Naive thymus-derived CD4-positive, alpha-beta T cell (primary cell): ENCODE measurements at regions of chr1 and their contacts with region 1.

Region 1: DNA sequence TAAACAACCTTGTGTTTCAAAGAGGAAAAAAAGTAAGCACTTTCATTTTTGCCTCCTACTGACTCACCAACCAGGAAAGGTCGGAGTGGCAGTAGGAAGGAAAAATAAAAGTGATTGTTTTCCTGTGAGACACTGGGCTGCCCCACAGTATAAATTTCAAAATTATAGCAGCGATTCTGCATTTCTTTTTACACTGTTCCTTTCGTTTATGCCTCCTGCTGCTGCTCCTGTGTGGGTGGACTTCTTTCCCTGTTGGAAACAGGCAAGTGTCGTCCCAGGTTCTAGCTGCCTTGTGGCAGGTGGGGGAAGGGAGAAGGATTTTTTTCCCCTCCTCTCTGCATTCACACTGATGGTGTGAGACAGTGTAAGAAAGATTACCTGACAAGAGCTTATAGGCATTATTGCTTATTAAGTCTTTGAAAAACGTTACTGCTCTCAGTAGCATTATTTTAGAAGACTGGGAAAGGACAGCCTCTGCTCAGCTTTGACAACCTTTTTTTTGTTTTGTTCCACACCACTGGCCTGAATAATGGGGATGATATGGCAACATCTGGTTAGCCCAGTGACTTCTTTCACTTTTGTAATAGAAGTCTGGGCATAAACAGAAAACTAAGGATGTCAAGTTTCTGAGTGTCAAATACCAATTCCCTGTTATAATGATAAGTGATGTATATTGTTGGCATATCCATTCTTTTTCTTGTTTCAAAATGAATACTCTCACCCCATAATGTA is 77.9 kb downstream of the NEK7 start:
- DNase-seq: no peak
- ATAC-seq: no peak
- H3K4me3 ChIP-seq: no peak overlapping the region
- H3K4me3 Mint-ChIP-seq: no peak overlapping the region
- H3K27ac ChIP-seq: no peak overlapping the region
- H3K27ac Mint-ChIP-seq: no peak overlapping the region
- H3K4me1 ChIP-seq: peaks cover 0 to 8% of the 10 kb centered on the region in 2 donors
- H3K4me1 Mint-ChIP-seq: peaks cover 12 to 48% (median 30%) of the 10 kb centered on the region in 7 donors
- H3K27me3 ChIP-seq: no peaks in the 10 kb centered on the region
- H3K27me3 Mint-ChIP-seq: no peaks in the 10 kb centered on the region

Region 2: DNA sequence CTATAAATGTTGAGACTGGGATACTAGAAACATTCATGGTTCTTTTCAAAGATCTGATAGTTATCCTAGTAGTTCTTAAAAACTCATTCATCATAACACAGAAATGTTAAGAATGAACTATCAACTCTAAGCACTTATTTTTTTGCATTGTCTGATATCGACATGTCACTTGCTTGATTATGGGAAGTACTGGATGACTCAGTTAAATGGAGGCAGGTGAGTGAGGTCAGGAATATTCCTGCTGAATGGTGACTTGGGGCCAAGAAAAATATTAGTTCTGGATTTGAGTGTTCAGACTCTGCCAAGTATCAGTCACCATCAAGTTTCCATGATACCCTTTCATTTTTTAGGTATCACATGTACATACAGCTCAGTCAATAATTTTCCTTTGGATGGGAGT is 14.3 kb before region 1 on chr1:
- CTCF ChIA-PET with region 1: interaction called, 5 read pairs
- POLR2A ChIA-PET with region 1: no interaction called
- intact Hi-C with region 1: loop called in 1 of 2 experiments (anchors 2 kb)
- DNase-seq: no peak
- ATAC-seq: no peak
- H3K4me3 ChIP-seq: no peak overlapping the region
- H3K4me3 Mint-ChIP-seq: no peak overlapping the region
- H3K27ac ChIP-seq: no peak overlapping the region
- H3K27ac Mint-ChIP-seq: peak overlapping the region in 3 of 9 donors; percentile 4 to 69 (median 19)
- H3K4me1 ChIP-seq: no peaks in the 10 kb centered on the region
- H3K4me1 Mint-ChIP-seq: peaks cover 8 to 56% (median 39%) of the 10 kb centered on the region in 7 donors
- H3K27me3 ChIP-seq: no peaks in the 10 kb centered on the region
- H3K27me3 Mint-ChIP-seq: no peaks in the 10 kb centered on the region

Region 3: GRCh38 chr1:198246337-198246736 is 11.7 kb after region 1 on chr1:
- CTCF ChIA-PET with region 1: no interaction called
- POLR2A ChIA-PET with region 1: no interaction called
- intact Hi-C with region 1: loop called in 1 of 2 experiments (anchors 1 kb)
- DNase-seq: no peak
- ATAC-seq: no peak
- H3K4me3 ChIP-seq: no peak overlapping the region
- H3K4me3 Mint-ChIP-seq: no peak overlapping the region
- H3K27ac ChIP-seq: no peak overlapping the region
- H3K27ac Mint-ChIP-seq: no peak overlapping the region
- H3K4me1 ChIP-seq: no peaks in the 10 kb centered on the region
- H3K4me1 Mint-ChIP-seq: peaks cover 12 to 47% (median 32%) of the 10 kb centered on the region in 7 donors
- H3K27me3 ChIP-seq: no peaks in the 10 kb centered on the region
- H3K27me3 Mint-ChIP-seq: no peaks in the 10 kb centered on the region

Region 4: DNA sequence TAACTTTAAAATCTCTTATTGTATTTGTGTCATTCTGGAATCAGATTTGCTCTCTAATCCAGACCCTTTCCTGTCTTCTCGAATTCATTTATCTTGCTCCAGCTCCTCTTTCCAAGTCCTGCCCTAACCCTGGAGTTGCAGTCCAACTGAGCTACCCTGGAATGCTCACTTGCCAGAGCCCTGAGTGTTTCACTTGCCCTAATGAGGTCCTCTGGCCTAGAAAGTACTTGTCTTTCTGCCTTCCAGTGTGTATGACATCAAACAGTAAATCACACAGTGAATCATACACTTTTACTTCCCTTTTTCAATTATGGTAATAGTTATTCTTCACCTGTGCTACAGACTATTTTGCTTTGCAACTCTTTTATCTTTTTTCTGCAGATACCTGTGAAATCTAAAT is 19.0 kb after region 1 on chr1:
- CTCF ChIA-PET with region 1: no interaction called
- POLR2A ChIA-PET with region 1: no interaction called
- intact Hi-C with region 1: loop called in 1 of 2 experiments (anchors 1 kb)
- DNase-seq: no peak
- ATAC-seq: peak; percentile 66
- H3K4me3 ChIP-seq: no peak overlapping the region
- H3K4me3 Mint-ChIP-seq: peak overlapping the region in 1 of 10 donors; percentile 50
- H3K27ac ChIP-seq: no peak overlapping the region
- H3K27ac Mint-ChIP-seq: peak overlapping the region in 8 of 9 donors; percentile 8 to 79 (median 61)
- H3K4me1 ChIP-seq: no peaks in the 10 kb centered on the region
- H3K4me1 Mint-ChIP-seq: peaks cover 24 to 59% (median 50%) of the 10 kb centered on the region in 7 donors
- H3K27me3 ChIP-seq: no peaks in the 10 kb centered on the region
- H3K27me3 Mint-ChIP-seq: no peaks in the 10 kb centered on the region